Activated T-helper 1 cell treated with anti-CD3 and anti-CD28 coated beads, Interleukin-12 subunit alpha, Interleukin-12 subunit beta, Interleukin-2, Interleukin-4 antibody, amounts not matched to agents 30 ng/mL and 10 ng/mL and 1 ng/mL, durations not matched to agents 14 hours and 24 hours and 36 hours (primary cell): ENCODE measurements at regions of chr11 and their contacts with region 1.

Region 1: DNA sequence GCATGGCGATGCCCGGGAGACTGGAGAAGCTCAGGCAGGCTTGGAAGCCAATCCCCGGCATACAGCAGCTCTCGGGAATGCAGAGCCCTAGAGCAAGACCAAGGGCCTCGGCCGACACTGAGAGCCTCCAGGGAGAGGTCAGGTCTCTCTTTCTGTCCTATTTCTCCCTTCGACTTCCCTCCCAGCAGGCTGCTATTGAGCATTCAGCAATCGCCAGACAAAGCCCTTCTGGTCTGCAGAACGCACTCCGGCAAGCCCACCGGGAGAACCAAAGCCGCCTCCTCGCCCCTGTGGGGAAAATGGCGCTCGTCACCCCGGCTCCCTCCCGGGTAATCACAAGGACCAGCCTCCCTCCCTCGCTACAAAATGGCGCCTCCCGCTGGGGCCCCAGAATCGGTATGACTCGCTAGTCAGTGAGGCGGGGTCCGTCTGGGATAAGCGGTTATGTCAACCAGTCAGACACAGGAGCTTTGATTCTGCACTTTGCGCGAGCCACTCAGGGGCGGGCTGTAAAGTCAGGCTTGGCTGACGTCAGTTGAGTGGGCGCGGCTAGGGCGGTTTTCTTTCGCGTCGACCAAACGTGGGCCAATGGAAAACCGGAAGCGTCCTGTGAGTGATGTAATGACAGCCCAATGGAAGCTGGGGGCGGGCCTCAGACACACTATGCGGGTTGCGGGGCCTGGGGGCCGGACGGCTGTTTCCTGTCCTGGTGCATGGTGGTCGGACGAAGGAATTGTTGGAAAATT is at the start of gene ZNF143:
- DNase-seq: peak; percentile 100
- H3K4me3 Mint-ChIP-seq: peak within 1 kb of the TSS; percentile 98
- H3K27ac Mint-ChIP-seq: peak within 1 kb of the TSS; percentile 97
- H3K4me1 Mint-ChIP-seq: peaks cover 27% of the 10 kb centered on the region
- H3K27me3 Mint-ChIP-seq: no peaks in the 10 kb centered on the region
- total RNA-seq, gene ZNF143: 30.3 and 30.7 TPM in 2 replicates

Region 2: DNA sequence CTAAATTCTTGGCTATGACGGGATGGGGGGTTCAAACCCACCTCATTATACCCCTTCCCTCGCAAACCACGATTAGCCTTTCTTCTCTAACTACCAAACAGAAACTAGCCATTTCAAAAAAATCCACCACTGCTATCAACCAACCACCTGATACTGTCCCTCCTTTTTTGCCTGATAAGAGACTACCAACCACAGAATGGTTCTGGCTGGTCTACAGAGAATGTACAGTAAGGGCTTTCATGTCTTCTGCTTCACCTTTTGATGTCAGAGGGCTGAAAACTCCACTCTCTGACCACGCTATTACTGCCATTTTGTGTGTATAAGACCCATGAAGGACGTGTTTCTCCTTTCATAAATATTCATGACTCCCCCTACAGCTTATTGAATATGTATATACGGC is 1310.8 kb before region 1 on chr11:
- intact Hi-C with region 1: no loop called
- DNase-seq: no peak
- H3K4me3 Mint-ChIP-seq: no peak overlapping the region
- H3K27ac Mint-ChIP-seq: no peak overlapping the region
- H3K4me1 Mint-ChIP-seq: no peaks in the 10 kb centered on the region
- H3K27me3 Mint-ChIP-seq: peaks cover 2% of the 10 kb centered on the region

Region 3: DNA sequence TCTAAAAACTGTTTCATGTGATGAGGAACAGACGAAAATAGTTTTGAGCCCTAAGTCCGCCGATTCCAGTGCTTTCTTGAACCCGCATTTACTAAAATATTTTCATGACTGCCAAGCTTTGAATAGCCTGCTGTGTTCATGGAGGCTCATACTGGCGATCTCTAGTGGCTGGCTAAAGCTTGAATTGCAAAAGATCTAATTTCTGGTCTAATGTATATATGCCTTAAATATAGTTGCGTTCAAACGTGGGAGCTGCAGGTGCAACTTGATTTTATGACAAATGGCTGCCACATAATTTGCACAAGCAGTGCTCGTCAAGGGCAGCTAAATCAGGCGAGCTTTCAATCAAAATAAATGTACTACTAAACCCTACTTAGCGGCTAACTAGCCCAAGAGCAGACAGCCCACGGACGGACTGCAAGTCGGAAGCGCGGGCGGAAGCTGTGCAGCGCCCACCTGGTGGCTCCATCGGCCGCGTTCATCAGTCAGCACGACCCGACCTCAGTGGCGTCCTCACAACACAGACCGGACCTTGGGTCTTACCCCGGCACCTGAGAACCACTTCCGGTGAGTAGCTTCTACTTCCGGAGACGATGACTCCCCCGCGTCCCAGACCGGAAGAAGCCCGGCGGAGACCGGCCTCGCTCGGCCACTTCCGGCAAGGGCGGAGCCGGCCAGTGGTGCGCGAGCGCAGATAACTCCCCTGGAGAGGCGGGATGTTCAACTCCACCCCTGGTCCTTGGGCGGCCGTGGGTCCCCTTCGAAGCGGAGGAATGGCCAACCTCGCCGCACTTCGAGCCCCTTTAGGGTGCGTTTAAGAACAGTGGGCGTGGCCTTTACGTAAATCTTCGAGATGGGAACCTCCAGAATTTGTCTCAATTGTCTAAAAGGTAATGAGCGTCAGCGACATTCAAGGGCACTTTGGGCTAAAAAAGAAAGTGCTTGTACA is 771.8 kb before region 1 on chr11:
- intact Hi-C with region 1: loop called (anchors 2 kb)
- DNase-seq: peak; percentile 82
- H3K4me3 Mint-ChIP-seq: peak overlapping the region; percentile 94
- H3K27ac Mint-ChIP-seq: peak overlapping the region; percentile 91
- H3K4me1 Mint-ChIP-seq: peaks cover 60% of the 10 kb centered on the region
- H3K27me3 Mint-ChIP-seq: no peaks in the 10 kb centered on the region

Region 4: DNA sequence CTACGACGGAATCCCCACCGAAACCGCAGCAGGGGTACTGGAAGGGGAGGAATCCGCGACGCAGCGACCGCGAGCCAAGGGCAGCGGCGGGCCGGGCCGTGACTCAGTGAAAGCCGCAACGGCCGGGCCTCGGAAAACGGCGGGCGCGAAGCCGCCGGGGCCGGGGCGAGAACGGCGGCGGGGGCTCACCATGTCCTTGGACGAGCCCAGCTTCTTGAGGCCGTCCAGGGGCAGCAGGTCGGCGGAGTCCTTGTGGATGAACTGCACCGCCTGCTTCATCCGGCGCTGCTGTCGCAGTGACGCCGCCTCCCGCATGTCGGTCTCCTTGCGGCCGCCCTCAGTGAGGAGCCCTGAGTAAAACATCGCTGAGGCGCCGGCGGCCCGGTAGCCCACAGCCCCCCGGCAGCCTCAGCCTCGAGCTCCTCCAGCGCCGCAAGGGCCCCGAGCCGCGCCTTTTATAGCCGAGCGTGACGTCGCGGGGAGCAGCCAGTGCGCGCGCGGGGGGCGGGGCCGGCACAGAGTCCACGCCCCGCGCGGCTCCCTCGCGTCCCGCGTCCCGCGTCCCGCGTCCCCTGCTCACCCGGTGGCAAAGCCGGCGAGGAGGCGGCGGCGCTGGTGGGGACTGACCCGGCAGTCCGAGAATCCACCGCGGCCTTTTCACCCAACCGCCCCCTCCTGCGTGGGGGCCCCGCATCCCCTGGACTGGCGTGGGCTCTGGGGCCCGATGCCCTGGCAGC is 456.8 kb before region 1 on chr11 and contains the start of gene NRIP3:
- intact Hi-C with region 1: loop called (anchors 5 kb)
- DNase-seq: peak; percentile 73
- H3K4me3 Mint-ChIP-seq: peak within 1 kb of the TSS; percentile 83
- H3K27ac Mint-ChIP-seq: peak within 1 kb of the TSS; percentile 76
- H3K4me1 Mint-ChIP-seq: peaks cover 31% of the 10 kb centered on the region
- H3K27me3 Mint-ChIP-seq: peaks cover 36% of the 10 kb centered on the region
- total RNA-seq, gene NRIP3: 4.4 and 4.8 TPM in 2 replicates

Region 5: DNA sequence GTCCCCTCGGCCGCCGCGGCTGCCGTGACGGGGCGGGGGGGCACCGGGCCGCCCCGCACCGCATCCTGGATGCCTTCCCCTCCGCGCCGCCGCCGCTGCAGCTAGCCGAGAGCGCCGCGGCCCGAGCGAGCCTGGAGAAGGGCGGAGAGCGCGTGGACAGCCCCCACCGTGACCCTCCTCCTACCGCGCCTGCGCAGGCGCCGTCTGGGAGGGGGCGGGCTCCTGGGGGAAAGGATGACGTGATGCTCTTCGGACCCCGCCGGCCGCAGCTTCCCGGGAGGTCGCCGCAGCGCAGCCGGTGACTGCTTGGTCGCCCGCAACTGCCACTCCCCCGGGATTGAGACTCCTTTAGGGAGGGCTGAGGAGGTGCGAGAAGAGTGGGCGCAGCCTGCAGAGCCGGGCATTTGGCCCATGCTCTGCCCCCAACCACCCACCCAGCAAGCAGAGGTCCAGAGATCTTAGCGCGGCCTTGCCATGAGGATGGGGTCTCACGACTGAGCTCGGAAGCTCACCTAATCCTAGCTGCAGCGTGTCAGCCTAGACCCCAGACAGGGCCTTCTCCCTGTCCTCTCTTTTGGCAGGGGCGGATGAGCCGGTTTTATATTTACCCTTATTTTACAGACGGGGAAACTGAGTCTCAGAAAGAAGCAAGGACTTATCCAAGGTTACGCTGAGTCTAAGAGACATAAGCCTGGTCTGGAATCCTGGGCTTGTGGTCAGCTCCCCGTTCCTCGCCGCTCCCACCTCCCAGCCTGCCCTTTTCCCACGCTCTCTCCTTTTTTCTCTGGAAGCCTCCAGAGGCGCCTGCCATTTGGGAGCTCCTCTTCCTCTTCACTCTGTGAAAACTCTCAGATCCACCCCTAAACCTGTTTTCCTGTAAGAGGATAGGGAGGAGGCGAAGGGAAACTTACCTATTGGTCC is 195.0 kb before region 1 on chr11 and contains the start of gene DENND5A:
- intact Hi-C with region 1: loop called (anchors 1 kb)
- DNase-seq: peak; percentile 36
- H3K4me3 Mint-ChIP-seq: peak within 1 kb of the TSS; percentile 82
- H3K27ac Mint-ChIP-seq: peak within 1 kb of the TSS; percentile 80
- H3K4me1 Mint-ChIP-seq: peaks cover 33% of the 10 kb centered on the region
- H3K27me3 Mint-ChIP-seq: peaks cover 35% of the 10 kb centered on the region
- total RNA-seq, gene DENND5A: 45.6 and 47.6 TPM in 2 replicates

Region 6: DNA sequence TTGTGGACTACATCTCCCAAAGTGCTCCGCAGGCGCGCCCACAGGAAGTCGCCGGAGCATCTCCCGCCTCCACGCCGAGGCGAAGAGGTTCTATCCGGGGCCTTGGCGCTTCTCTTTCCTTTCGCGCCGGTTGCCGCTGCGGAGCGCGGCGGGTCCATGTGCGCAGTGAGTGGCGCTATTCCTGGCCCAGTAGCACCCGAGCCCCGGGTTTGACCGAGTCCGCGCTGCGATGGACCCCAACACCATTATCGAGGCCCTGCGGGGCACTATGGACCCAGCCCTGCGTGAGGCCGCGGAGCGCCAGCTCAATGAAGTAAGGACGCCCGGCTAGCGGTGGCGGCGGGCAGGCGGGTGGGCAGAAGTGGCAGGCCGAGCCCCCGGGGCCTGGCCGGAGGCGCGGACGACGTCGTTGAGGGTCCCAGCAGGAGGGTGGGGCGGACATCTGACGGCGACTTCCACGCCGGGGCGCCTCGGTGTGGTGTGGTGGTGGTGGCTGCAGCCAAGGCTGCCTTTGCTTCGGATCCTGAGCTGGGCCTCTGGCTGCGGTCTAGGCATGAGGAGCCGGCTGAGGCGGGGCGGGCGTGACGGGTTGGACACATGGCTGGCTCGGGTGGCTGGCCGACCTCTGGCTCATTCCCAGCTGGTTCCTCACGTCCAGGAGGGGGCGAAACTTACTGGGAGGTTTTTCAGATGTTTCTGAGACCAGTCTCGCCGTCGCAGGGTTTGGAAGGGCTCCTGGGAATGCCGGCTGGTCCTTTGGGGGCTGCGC is 75.8 kb before region 1 on chr11 and contains the start of gene IPO7:
- intact Hi-C with region 1: loop called (anchors 1 kb)
- DNase-seq: peak; percentile 87
- H3K4me3 Mint-ChIP-seq: peak within 1 kb of the TSS; percentile 96
- H3K27ac Mint-ChIP-seq: peak within 1 kb of the TSS; percentile 95
- H3K4me1 Mint-ChIP-seq: peaks cover 36% of the 10 kb centered on the region
- H3K27me3 Mint-ChIP-seq: no peaks in the 10 kb centered on the region
- total RNA-seq, gene IPO7: 136 and 153 TPM in 2 replicates

Region 7: DNA sequence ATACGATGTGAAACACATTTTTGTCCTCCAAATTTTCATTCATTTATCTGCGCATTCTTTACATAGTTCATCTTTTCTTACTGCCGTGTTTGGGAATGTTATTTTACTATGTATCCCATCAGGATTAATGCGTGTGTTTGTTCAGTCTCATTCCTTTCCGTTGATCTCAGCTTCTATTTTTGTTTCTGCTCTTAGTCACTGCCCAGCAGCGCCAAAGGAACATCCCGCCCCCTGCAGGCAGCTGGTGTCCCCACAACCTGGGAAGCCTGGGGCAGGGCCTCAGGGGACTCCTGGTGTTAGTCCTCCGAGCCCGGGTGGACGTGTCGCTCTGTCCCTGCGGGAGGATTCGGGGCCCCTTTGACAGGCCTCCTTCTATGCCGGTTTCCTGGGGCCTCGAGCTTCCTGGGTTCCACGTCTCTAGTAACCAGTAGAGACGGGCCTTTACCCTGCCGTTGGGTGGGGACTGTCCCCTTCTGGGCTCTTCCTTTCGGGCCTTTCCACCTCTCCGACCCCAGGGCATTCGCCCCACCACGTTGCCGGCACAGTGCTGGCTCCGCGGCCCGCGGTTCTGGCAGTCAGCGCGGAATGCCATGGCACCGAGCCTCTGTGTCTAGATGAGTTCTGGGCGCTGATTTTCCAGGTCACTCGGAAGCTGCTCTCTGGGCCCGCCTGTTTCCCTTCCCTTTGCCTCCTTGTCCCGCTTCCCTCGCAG is 152.8 kb after region 1 on chr11:
- intact Hi-C with region 1: loop called (anchors 1 kb)
- DNase-seq: peak; percentile 80
- H3K4me3 Mint-ChIP-seq: peak overlapping the region; percentile 89
- H3K27ac Mint-ChIP-seq: peak overlapping the region; percentile 99
- H3K4me1 Mint-ChIP-seq: peaks cover 44% of the 10 kb centered on the region
- H3K27me3 Mint-ChIP-seq: peaks cover 1% of the 10 kb centered on the region

Region 8: GRCh38 chr11:10322830-10323792 is 862.6 kb after region 1 on chr11:
- intact Hi-C with region 1: loop called (anchors 5 kb)
- DNase-seq: no peak
- H3K4me3 Mint-ChIP-seq: no peak overlapping the region
- H3K27ac Mint-ChIP-seq: peak overlapping the region; percentile 88
- H3K4me1 Mint-ChIP-seq: peaks cover 20% of the 10 kb centered on the region
- H3K27me3 Mint-ChIP-seq: peaks cover 16% of the 10 kb centered on the region